Activated CD8-positive, alpha-beta T cell treated with anti-CD3 and anti-CD28 coated beads for 36 hours (primary cell): ENCODE measurements at regions of chr2 and their contacts with region 1.

Region 1: GRCh38 chr2:72887754-72888437 is 688 bp downstream of the SPR start:
- DNase-seq: peak; percentile 68
- ATAC-seq: peak; percentile 47
- H3K4me3 Mint-ChIP-seq: peak overlapping the region; percentile 72
- H3K27ac Mint-ChIP-seq: no peak overlapping the region
- H3K4me1 Mint-ChIP-seq: peaks cover 6% of the 10 kb centered on the region
- H3K27me3 Mint-ChIP-seq: peaks cover 50% of the 10 kb centered on the region
- CTCF ChIP-seq: peak; percentile 89

Region 2: GRCh38 chr2:72862239-72862988 is 25.5 kb before region 1 on chr2:
- CTCF ChIA-PET with region 1: interaction called, 33 read pairs
- POLR2A ChIA-PET with region 1: interaction called, 3 read pairs
- intact Hi-C with region 1: no loop called
- DNase-seq: peak; percentile 89
- ATAC-seq: peak; percentile 92
- H3K4me3 Mint-ChIP-seq: peak overlapping the region; percentile 51
- H3K27ac Mint-ChIP-seq: no peak overlapping the region
- H3K4me1 Mint-ChIP-seq: peaks cover 9% of the 10 kb centered on the region
- H3K27me3 Mint-ChIP-seq: peaks cover 51% of the 10 kb centered on the region
- CTCF ChIP-seq: peak; percentile 96

Region 3: DNA sequence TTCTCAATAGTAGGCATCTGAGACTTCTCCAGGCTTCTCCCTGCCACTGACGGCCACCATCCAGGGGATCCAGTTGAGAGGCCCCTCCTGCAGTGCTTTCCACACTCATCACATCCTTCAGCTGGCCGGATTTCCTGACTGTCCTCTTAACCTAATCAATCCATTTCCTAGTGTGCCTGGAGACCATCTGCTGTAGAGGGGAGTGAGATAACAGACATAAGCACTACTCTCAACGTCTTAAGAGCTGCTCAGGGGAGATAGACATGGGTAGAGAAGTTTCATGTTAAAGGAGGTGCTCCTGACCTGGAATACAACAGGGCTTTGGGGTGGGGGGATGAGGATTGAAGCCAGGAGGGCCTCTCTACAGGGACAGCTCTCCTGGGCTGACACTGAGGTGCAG is 13.5 kb after region 1 on chr2:
- CTCF ChIA-PET with region 1: interaction called, 33 read pairs
- POLR2A ChIA-PET with region 1: no interaction called
- intact Hi-C with region 1: no loop called
- DNase-seq: no peak
- ATAC-seq: no peak
- H3K4me3 Mint-ChIP-seq: no peak overlapping the region
- H3K27ac Mint-ChIP-seq: no peak overlapping the region
- H3K4me1 Mint-ChIP-seq: no peaks in the 10 kb centered on the region
- H3K27me3 Mint-ChIP-seq: peaks cover 39% of the 10 kb centered on the region
- CTCF ChIP-seq: no peak

Region 4: DNA sequence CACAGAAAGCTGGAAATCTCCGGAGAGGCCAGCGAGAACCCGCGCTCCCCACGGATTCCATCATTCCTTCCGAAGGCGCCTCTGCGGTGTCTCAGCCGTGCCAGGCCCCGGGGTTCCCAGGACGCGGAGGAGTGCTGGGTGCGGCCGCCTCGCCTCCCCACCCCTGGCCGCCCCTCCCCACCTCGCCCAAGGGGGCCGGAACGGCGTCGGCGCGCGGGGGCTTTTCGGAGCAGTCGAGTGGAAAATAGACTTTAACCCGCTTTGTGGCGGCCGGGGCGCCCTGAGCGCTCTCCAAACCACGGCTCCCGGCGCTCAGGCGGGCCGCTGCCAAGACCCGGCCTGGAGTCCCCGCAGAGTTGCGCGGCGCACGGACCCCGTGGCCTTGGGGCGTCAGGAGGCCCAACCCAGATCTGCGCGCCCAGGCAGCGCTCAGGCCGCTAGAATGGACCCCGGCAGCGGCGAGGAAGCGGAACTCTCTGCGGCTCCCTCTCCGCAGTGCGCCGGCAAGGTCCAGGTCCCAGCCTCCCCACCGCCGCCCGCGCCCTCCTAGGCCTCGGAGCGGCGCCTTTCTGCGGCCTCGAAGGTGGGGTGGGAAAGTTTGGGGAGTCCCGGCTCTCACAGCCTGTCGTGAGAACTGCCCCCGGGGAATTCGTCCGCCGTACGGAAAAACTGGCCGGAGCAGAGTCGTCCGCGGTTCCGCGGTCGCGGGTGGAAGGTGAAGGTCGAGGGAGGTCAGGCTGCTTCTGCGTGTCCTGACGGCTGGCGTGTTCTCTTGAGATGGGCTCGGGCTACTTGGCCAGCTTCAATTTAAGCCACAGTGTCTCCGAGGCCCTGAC is 28.2 kb after region 1 on chr2:
- CTCF ChIA-PET with region 1: interaction called, 23 read pairs
- POLR2A ChIA-PET with region 1: no interaction called
- intact Hi-C with region 1: no loop called
- DNase-seq: peak; percentile 62
- ATAC-seq: peak; percentile 60
- H3K4me3 Mint-ChIP-seq: peak overlapping the region; percentile 69
- H3K27ac Mint-ChIP-seq: no peak overlapping the region
- H3K4me1 Mint-ChIP-seq: peaks cover 31% of the 10 kb centered on the region
- H3K27me3 Mint-ChIP-seq: peaks cover 78% of the 10 kb centered on the region
- CTCF ChIP-seq: no peak

Region 5: DNA sequence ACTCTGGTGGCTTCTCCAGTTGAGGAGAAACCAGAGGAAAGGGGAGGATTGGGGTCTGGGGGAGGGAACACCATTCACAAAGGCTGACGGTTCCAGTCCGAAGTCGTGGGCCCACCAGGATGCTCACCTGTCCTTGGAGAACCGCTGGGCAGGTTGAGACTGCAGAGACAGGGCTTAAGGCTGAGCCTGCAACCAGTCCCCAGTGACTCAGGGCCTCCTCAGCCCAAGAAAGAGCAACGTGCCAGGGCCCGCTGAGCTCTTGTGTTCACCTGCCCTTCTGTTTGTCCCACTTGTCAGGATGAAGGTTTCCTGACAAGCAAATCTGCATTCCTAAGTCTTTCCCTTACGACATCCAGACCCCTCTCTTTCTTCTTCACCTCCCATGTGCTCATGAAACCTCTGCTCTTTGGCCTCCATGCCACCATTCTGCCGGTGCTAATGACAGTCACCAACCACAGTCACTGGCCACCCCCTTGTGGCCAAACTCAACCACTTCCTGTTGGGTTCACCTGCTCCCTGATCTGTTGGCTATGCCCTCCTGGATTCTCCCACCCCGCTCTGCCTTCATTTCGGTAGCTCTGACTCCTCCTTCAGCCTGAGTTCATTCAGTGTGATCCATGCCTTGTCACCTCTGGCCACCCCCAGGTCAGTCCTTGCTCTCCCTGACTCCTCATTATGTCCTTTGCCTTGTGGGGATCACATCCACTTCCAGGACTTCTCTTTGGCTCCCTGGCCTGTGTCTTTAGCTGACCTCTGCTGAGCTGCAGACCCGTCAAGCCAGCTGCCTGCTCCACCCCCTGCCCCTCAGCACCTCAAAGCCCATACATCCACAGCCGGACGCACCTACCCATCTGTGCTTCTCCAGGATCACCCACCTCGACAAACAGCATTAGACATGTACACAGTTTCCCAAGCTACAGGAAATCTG is 47.1 kb after region 1 on chr2:
- CTCF ChIA-PET with region 1: interaction called, 18 read pairs
- POLR2A ChIA-PET with region 1: no interaction called
- intact Hi-C with region 1: no loop called
- DNase-seq: peak; percentile 51
- ATAC-seq: no peak
- H3K4me3 Mint-ChIP-seq: no peak overlapping the region
- H3K27ac Mint-ChIP-seq: no peak overlapping the region
- H3K4me1 Mint-ChIP-seq: no peaks in the 10 kb centered on the region
- H3K27me3 Mint-ChIP-seq: peaks cover 5% of the 10 kb centered on the region
- CTCF ChIP-seq: no peak

Region 6: DNA sequence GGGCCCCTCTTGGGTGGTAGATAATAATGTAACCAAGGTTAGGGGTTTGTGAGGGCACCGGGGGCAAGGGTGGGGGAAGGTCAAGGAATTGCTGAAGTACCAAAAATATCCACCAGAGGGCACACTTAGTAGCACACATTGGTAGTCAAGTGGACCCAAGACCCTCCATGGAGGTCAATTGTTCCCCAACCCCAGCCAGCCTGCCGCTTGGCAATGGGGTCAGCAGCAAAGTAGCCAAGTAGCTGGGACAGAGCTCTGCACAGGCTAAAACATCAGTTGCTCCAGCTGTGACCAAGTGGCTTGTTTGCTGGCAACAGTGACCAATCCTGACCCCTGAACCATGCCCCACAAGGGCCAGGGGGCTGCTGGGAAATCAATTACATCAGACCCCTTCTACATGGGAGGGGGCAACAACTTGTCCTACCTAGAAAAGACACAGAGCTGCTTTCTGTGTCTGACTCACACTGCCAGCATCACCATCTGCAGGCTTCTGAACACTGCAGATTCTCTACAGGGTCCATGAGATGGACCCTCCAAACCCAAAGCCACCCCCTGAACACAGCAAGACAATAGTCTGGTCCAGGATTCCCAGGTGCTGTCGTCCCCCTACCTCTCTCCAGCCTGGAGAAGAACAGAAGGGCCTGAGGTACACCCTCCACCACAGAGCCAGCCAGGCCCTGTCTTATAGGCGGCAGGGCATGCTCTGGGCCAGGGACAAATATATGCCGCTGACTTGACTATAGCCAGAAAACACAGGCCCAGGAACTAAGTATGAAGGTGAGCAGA is 105.4 kb after region 1 on chr2:
- CTCF ChIA-PET with region 1: interaction called, 11 read pairs
- POLR2A ChIA-PET with region 1: no interaction called
- intact Hi-C with region 1: no loop called
- DNase-seq: peak; percentile 51
- ATAC-seq: peak; percentile 79
- H3K4me3 Mint-ChIP-seq: no peak overlapping the region
- H3K27ac Mint-ChIP-seq: no peak overlapping the region
- H3K4me1 Mint-ChIP-seq: no peaks in the 10 kb centered on the region
- H3K27me3 Mint-ChIP-seq: no peaks in the 10 kb centered on the region
- CTCF ChIP-seq: peak; percentile 81

Region 7: DNA sequence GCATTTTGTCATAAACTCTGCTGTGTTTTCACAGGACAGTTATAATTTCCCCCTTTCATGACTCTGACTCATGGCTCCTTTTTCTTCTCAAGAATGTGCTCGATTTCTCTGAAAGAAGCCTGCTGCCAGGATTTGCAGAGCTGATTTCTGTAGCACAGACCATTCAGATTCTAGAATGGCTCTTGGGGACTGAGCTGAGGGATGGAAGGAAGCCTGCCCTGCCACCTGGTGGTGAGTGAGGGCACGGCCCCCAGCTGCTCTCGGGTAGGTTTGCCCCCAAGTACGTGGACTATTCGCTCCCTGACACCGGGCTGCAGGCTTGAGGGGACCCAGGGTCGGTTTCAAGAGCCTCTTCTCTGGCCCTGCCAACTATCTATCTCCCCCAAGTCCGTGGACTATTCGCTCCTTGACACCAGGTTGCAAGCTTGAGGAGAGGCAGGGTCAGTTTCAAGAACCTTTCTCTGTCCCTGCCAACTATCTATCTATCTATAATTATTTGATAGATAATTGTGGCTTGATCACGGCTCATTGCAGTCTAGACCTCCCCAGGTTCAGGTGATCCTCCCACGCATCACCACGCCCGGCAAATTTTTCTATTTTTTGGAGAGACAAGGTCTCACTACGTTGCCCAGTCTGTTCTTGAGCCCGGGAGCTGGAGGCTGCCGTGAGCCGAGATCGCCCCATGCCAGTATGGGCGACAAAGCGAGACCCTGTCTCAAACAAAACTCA is 324.7 kb after region 1 on chr2:
- CTCF ChIA-PET with region 1: interaction called, 11 read pairs
- POLR2A ChIA-PET with region 1: no interaction called
- intact Hi-C with region 1: no loop called
- DNase-seq: peak; percentile 89
- ATAC-seq: peak; percentile 78
- H3K4me3 Mint-ChIP-seq: peak overlapping the region; percentile 33
- H3K27ac Mint-ChIP-seq: no peak overlapping the region
- H3K4me1 Mint-ChIP-seq: peaks cover 29% of the 10 kb centered on the region
- H3K27me3 Mint-ChIP-seq: no peaks in the 10 kb centered on the region
- CTCF ChIP-seq: peak; percentile 90